Motor neuron (in vitro differentiated cells): ENCODE measurements at regions of chr17 and their contacts with region 1.

Region 1: GRCh38 chr17:21239680-21240368 is 13.4 kb downstream of the NATD1 start:
- ATAC-seq: peak; percentile 10 to 62 (median 27)
- H3K4me3 ChIP-seq: no peak overlapping the region
- H3K27ac ChIP-seq: no peak overlapping the region
- H3K4me1 ChIP-seq: peaks cover 16 to 24% of the 10 kb centered on the region in 2 donors

Region 2: DNA sequence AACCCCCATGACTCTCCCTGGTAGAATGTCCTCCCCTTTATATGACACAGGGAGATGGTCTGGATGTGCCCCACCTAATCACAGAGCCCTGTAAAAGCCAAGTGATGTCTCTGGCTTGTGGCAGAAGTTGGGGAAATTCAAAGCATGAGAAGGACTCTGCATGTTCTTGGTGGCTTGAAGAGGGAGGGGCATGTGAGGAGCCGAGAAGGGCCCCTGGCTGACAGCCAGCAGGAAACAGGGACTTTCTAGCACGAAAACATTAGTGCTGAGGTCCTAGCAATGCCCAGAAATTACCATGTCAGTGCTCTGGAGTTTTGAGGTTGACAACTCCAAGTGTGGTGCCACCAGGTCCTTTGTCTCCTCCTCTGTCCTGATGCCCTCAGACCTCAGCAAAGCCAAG is 273.0 kb before region 1 on chr17:
- in situ Hi-C with region 1: no loop called
- ATAC-seq: peak in 2 of 8 experiments; percentile 39 to 62
- H3K4me3 ChIP-seq: no peak overlapping the region
- H3K27ac ChIP-seq: no peak overlapping the region
- H3K4me1 ChIP-seq: no peaks in the 10 kb centered on the region

Region 3: DNA sequence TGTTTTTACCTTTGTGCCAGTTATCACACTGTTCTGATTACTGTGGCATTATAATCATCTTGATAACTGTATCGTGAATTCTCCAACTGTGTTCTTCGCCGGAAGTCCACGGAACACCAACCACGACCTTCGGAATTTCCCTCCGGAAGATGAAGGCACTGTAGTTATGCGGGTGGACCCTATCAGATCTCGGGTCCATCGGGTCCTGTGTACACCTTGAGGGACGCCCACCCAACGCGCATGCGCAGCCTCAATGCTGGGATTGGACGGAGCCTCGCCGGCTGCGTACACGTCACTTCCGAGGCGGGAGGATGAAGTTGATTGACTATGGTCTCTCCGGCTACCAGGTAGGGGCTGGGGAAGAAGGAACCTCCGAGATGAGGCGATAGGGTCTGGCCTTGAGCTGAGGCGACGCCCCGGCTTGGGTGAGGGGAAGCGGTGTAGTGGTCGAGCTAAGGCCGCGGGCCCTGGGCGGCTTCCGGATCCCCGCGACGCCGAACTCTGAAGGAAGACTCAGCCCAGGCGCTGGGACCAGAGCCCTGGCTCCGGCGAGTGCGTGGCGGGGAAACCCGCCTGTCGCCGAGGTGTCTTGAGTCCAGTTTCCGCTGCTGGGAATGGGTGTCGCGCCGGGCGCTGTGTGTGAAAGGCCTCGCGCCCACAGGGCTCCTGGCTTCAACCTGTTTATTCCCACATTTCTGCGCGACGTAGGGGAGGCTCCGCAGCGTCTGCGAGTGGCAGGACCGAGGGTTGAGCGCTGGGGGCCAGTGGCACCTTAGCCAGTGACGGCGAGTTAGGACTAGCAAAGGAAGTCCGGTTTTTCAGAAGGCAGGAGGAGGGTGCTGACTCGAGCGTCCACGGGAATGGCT is 112.9 kb before region 1 on chr17 and contains the start of gene DHRS7B:
- in situ Hi-C with region 1: loop called in 1 of 9 experiments (anchors 25 kb)
- ATAC-seq: peak; percentile 72 to 98 (median 97)
- H3K4me3 ChIP-seq: peak within 1 kb of the TSS; percentile 52 to 95 (median 71)
- H3K27ac ChIP-seq: peak within 1 kb of the TSS; percentile 52 to 69
- H3K4me1 ChIP-seq: peaks cover 0 to 3% of the 10 kb centered on the region in 2 donors
- total RNA-seq, gene DHRS7B: 8.3 to 49.4 (median 18.3) TPM